ENCODE measurements at regions of chr3 and their contacts with region 1.

Region 1: GRCh38 chr3:32947789-32948238 is 3.6 kb upstream of the CCR4 start:
- DNase-seq: peak; percentile 60 to 72 (median 67)
- H3K4me3 ChIP-seq: no peak overlapping the region
- H3K4me3 Mint-ChIP-seq: no peak overlapping the region
- H3K27ac ChIP-seq: no peak overlapping the region
- H3K27ac Mint-ChIP-seq: peak overlapping the region in 1 of 7 donors; percentile 50
- H3K4me1 ChIP-seq: no peaks in the 10 kb centered on the region
- H3K4me1 Mint-ChIP-seq: peaks cover 11% of the 10 kb centered on the region
- H3K27me3 ChIP-seq: no peaks in the 10 kb centered on the region
- H3K27me3 Mint-ChIP-seq: no peaks in the 10 kb centered on the region
- CTCF ChIP-seq: peak; percentile 89

Region 2: GRCh38 chr3:33074217-33075067 is 126.6 kb after region 1 on chr3:
- intact Hi-C with region 1: loop called (anchors 2 to 5 kb)
- DNase-seq: peak; percentile 45 to 55 (median 51)
- H3K4me3 ChIP-seq: no peak overlapping the region
- H3K4me3 Mint-ChIP-seq: no peak overlapping the region
- H3K27ac ChIP-seq: peak overlapping the region in 1 of 2 donors; percentile 44
- H3K27ac Mint-ChIP-seq: peak overlapping the region in 3 of 7 donors; percentile 6 to 59 (median 55)
- H3K4me1 ChIP-seq: peaks cover 17 to 20% of the 10 kb centered on the region in 2 donors
- H3K4me1 Mint-ChIP-seq: peaks cover 25% of the 10 kb centered on the region
- H3K27me3 ChIP-seq: no peaks in the 10 kb centered on the region
- H3K27me3 Mint-ChIP-seq: no peaks in the 10 kb centered on the region
- CTCF ChIP-seq: peak; percentile 83